AG04449 (cell line): ENCODE measurements at regions of chr19 and their contacts with region 1.

Region 1: DNA sequence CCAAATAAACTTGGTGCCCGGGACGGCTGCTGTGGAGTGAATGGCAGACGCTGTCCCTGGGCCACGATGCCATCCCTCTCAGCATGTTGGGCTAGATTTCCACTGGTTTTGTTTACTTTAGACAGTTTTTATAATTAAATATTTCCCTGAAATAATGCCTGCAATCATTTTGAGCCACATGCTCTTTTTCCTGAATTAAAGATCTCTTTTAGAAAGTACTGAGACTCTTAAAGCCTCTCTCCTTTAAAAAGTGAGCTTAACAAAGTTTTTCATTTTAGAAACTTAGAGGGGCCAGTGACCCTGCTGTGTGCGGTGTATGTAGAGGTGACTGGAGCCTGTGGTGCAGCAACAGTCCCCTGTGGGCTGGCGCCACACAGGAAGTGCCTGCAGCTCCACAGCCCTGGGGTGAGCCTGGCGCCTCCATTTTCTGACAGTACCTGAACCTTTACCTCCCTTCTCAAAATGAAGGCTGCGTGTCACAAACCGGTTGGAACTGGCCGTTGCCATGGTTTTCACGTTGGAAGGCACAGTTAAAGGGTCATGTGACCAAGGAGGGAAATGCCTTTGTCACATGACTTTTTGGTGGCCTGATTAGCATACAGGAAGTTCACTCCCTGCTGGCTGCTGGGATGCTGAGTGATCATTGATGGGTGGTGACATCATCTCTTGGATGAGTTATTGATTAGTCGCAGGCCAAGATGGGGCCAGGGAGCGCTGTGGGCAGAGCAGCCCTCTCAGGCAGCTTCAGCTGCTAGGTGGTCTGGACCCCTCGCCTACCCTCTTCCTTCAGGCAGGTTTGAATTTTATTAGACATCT is 26.3 kb downstream of the TSSK6 start:
- DNase-seq: peak; percentile 75
- H3K4me3 ChIP-seq: no peak overlapping the region
- CTCF ChIP-seq: no peak

Region 2: DNA sequence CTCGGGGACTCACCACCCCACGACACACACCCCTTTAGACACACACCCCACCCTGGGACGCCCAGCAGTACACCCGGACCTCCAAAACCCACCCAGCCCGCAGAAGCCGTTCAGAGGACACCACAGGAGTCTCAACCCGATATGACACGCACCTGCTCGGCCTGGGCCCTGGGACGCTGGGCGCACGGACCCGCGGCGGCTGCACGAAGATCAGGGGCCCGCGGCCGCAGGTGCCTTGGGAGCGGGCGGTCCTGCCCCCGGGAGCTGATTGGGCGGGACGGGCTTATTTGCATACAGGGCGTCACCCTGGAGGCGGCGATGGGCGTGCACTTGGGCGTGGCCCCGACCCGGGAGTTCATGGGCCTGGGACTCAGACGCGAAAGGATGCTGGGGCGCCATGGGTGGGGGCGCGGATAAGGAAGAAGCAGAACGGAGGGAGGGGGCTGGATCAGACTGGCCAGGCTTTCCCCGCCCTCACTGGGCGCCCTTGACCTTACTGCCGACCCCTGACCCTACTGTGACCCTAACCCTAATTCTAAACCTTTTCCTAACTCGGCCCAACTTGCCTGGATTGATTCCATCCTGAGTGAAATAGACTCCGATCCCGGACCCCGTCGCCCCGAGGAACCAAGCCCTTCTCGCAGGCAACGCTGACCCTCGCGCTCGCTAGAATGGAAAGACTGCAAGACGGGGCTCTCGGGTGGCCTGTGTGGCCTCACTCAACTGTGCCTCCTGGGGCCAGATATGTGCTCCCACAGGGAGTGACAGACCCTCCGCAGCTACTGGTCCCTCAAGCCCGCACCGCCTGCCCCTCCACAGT is 318.8 kb before region 1 on chr19 and contains the start of gene MEF2B:
- CTCF ChIA-PET with region 1: interaction called, 10 read pairs
- POLR2A ChIA-PET with region 1: no interaction called
- DNase-seq: no peak
- H3K4me3 ChIP-seq: peak within 1 kb of the TSS; percentile 23
- CTCF ChIP-seq: no peak

Region 3: GRCh38 chr19:19348266-19348665 is 140.8 kb before region 1 on chr19:
- CTCF ChIA-PET with region 1: interaction called, 24 read pairs
- POLR2A ChIA-PET with region 1: no interaction called
- DNase-seq: no peak
- H3K4me3 ChIP-seq: no peak overlapping the region
- CTCF ChIP-seq: no peak

Region 4: DNA sequence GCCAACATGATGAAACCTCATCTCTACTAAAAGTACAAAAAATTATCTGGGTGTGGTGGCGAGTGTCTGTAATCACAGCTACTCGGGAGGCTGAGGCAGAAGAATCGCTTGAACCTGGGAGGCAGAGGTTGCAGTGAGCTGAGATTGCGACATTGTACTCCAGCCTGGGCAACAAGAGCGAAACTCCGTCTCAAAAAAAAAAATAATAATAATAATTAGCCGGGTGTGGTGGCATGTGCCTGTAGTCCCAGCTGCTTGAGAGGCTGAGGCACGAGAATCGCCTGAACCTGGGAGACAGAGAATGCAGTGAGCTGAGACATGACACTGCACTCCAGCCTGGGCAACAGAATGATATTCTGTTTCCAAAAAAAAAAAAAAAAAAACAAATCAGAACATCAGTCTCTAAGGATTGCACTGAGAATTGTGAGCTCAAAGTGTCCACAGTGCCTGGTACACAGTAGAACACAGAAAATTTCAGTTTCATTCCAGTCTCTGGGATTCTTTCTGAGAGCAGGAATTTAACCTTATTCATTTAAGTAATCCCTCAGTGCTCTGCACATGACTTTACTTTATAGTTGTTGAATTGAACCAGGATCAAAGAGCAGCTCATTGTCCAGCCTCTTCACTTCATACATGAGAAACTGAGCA is 109.7 kb before region 1 on chr19:
- CTCF ChIA-PET with region 1: interaction called, 32 read pairs
- POLR2A ChIA-PET with region 1: no interaction called
- DNase-seq: no peak
- H3K4me3 ChIP-seq: no peak overlapping the region
- CTCF ChIP-seq: no peak

Region 5: GRCh38 chr19:19475849-19476828 is 12.9 kb before region 1 on chr19:
- CTCF ChIA-PET with region 1: interaction called, 33 read pairs
- POLR2A ChIA-PET with region 1: no interaction called
- DNase-seq: no peak
- H3K4me3 ChIP-seq: no peak overlapping the region
- CTCF ChIP-seq: peak; percentile 35

Region 6: GRCh38 chr19:19515764-19516519 is 26.9 kb after region 1 on chr19 and contains the start of gene NDUFA13:
- CTCF ChIA-PET with region 1: interaction called, 22 read pairs
- POLR2A ChIA-PET with region 1: interaction called, 3 read pairs
- DNase-seq: peak; percentile 26
- H3K4me3 ChIP-seq: peak within 1 kb of the TSS; percentile 66
- CTCF ChIP-seq: no peak

Region 7: GRCh38 chr19:19540715-19541440 is 51.8 kb after region 1 on chr19:
- CTCF ChIA-PET with region 1: no interaction called
- POLR2A ChIA-PET with region 1: no interaction called
- DNase-seq: no peak
- H3K4me3 ChIP-seq: peak overlapping the region; percentile 0; the same call in 1 of the 2 replicates
- CTCF ChIP-seq: no peak